Testis (tissue), 5 donors: ENCODE measurements at regions of chr14 and their contacts with region 1.

Region 1: GRCh38 chr14:105045710-105046326 is 19.4 kb downstream of the GPR132 start:
- DNase-seq: peak; percentile 92
- H3K4me3 ChIP-seq: peak overlapping the region in 1 of 2 donors; percentile 17
- H3K27ac ChIP-seq: no peak overlapping the region
- H3K4me1 ChIP-seq: no peaks in the 10 kb centered on the region
- H3K27me3 ChIP-seq: no peaks in the 10 kb centered on the region
- CTCF ChIP-seq: peak; percentile 99 to 100 (median 100)
- POLR2A ChIP-seq: no peak

Region 2: GRCh38 chr14:104768437-104769323 is 277.1 kb before region 1 on chr14:
- intact Hi-C with region 1: loop called (anchors 10 kb)
- DNase-seq: peak; percentile 92
- H3K4me3 ChIP-seq: no peak overlapping the region
- H3K27ac ChIP-seq: no peak overlapping the region
- H3K4me1 ChIP-seq: peaks cover 11% of the 10 kb centered on the region
- H3K27me3 ChIP-seq: no peaks in the 10 kb centered on the region
- CTCF ChIP-seq: peak; percentile 87 to 97 (median 88)
- POLR2A ChIP-seq: no peak

Region 3: GRCh38 chr14:104895786-104896661 is 149.8 kb before region 1 on chr14:
- intact Hi-C with region 1: loop called (anchors 10 kb)
- DNase-seq: no peak
- H3K4me3 ChIP-seq: no peak overlapping the region
- H3K27ac ChIP-seq: no peak overlapping the region
- H3K4me1 ChIP-seq: peaks cover 4% of the 10 kb centered on the region
- H3K27me3 ChIP-seq: no peaks in the 10 kb centered on the region
- CTCF ChIP-seq: no peak
- POLR2A ChIP-seq: no peak

Region 4: DNA sequence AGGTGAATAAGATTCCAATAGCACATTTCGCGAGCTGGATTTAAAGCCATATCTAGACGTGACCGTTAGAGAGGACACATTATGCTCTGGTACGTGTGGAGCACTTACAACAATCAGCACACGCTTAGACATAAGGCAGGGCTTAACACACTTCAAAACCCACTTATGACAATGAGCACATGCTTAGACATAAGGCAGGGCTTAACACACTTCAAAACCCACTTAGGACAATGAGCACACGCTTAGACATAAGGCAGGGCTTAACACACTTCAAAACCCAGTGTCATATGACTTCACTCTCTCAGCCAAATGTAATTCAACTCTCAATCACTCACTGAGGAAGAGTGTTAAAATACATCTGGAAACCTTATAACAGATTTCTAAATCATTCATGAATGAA is 132.4 kb before region 1 on chr14:
- intact Hi-C with region 1: loop called (anchors 10 kb)
- DNase-seq: no peak
- H3K4me3 ChIP-seq: no peak overlapping the region
- H3K27ac ChIP-seq: no peak overlapping the region
- H3K4me1 ChIP-seq: no peaks in the 10 kb centered on the region
- H3K27me3 ChIP-seq: no peaks in the 10 kb centered on the region
- CTCF ChIP-seq: no peak
- POLR2A ChIP-seq: no peak

Region 5: DNA sequence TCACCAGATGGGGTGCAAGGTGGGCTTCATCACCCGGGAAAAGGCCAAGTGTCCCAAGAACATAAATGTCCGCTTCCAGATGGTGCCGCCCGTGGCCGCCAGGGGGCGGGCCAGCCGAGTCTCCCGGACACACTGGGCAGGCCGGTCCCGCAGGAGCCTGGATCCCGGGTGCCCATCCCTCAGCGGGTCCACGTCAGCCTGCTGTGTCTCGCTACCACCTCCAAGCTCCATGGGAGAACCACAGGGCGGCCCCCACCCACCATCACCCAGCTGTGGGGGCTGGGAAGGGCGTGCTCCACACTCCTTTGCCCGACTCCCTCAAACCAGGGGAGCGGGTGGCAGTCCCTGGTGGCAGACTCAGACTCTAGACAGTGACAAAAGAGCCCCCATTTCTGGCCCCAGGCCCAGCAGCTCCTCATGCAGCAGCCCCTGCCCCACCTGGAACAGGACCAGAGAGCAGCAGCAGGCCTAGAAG is 157.3 kb after region 1 on chr14:
- intact Hi-C with region 1: no loop called
- DNase-seq: peak; percentile 78
- H3K4me3 ChIP-seq: no peak overlapping the region
- H3K27ac ChIP-seq: no peak overlapping the region
- H3K4me1 ChIP-seq: peaks cover 15% of the 10 kb centered on the region
- H3K27me3 ChIP-seq: no peaks in the 10 kb centered on the region
- CTCF ChIP-seq: peak; percentile 83 to 90 (median 85)
- POLR2A ChIP-seq: no peak